T-cell (primary cell): ENCODE measurements at regions of chr5 and their contacts with region 1.

Region 1: GRCh38 chr5:155455791-155456514 is 442.4 kb downstream of the KIF4B start:
- DNase-seq: no peak
- ATAC-seq: no peak
- H3K4me3 ChIP-seq: no peak overlapping the region
- H3K4me3 Mint-ChIP-seq: no peak overlapping the region
- H3K27ac ChIP-seq: no peak overlapping the region
- H3K27ac Mint-ChIP-seq: no peak overlapping the region
- H3K4me1 ChIP-seq: no peaks in the 10 kb centered on the region
- H3K4me1 Mint-ChIP-seq: no peaks in the 10 kb centered on the region
- H3K27me3 ChIP-seq: no peaks in the 10 kb centered on the region
- H3K27me3 Mint-ChIP-seq: no peaks in the 10 kb centered on the region

Region 2: DNA sequence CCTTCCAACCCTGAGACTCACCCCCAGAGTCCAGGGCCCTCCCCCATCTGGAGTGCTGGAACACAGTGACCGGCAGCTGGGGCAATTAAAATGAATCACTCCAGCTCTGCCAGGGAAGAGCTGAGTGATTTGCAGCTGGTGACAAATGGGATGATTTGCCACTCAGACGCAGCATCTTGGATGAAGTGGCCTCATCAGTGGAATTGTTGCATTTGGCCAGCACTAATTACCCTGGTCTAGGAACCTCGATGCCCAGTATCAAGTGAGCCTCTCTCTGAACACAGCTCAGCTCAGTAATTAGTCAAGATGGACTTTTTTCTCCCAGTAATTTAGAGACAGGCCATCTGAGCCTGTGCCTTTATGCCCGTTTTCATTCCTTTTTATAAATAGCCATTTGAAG is 1706.0 kb before region 1 on chr5:
- CTCF ChIA-PET with region 1: no interaction called
- POLR2A ChIA-PET with region 1: interaction called in 1 of 2 experiments, 15 read pairs
- DNase-seq: no peak
- ATAC-seq: no peak
- H3K4me3 ChIP-seq: no peak overlapping the region
- H3K4me3 Mint-ChIP-seq: no peak overlapping the region
- H3K27ac ChIP-seq: no peak overlapping the region
- H3K27ac Mint-ChIP-seq: no peak overlapping the region
- H3K4me1 ChIP-seq: no peaks in the 10 kb centered on the region
- H3K4me1 Mint-ChIP-seq: no peaks in the 10 kb centered on the region
- H3K27me3 ChIP-seq: no peaks in the 10 kb centered on the region
- H3K27me3 Mint-ChIP-seq: no peaks in the 10 kb centered on the region

Region 3: GRCh38 chr5:155434681-155435080 is 21.3 kb before region 1 on chr5:
- CTCF ChIA-PET with region 1: no interaction called
- POLR2A ChIA-PET with region 1: no interaction called
- DNase-seq: no peak
- ATAC-seq: no peak
- H3K4me3 ChIP-seq: no peak overlapping the region
- H3K4me3 Mint-ChIP-seq: no peak overlapping the region
- H3K27ac ChIP-seq: no peak overlapping the region
- H3K27ac Mint-ChIP-seq: no peak overlapping the region
- H3K4me1 ChIP-seq: no peaks in the 10 kb centered on the region
- H3K4me1 Mint-ChIP-seq: no peaks in the 10 kb centered on the region
- H3K27me3 ChIP-seq: no peaks in the 10 kb centered on the region
- H3K27me3 Mint-ChIP-seq: no peaks in the 10 kb centered on the region

Region 4: DNA sequence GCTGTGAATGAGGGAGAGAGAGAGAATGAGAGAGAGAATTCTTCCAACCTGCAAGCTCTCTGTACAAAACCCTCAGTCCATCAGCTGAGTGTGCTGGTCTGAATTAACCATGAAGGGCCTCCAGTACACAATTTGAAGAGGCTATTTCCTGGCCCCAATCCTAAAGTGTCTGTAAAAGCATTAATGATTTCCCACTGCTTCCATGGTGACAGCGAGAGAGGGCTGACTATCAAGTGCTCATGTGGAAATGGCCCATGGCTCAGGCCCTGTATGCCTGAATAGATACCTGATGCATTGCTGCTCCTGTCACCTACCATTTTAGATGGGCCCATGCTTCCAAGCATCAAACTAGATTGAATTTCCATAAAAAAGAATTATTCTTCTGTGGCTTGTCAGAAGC is 150.0 kb after region 1 on chr5:
- CTCF ChIA-PET with region 1: no interaction called
- POLR2A ChIA-PET with region 1: no interaction called
- DNase-seq: no peak
- ATAC-seq: no peak
- H3K4me3 ChIP-seq: no peak overlapping the region
- H3K4me3 Mint-ChIP-seq: no peak overlapping the region
- H3K27ac ChIP-seq: no peak overlapping the region
- H3K27ac Mint-ChIP-seq: no peak overlapping the region
- H3K4me1 ChIP-seq: no peaks in the 10 kb centered on the region
- H3K4me1 Mint-ChIP-seq: no peaks in the 10 kb centered on the region
- H3K27me3 ChIP-seq: no peaks in the 10 kb centered on the region
- H3K27me3 Mint-ChIP-seq: peaks cover 2 to 8% of the 10 kb centered on the region in 2 donors